Activated CD4-positive, alpha-beta T cell treated with anti-CD3 and anti-CD28 coated beads, Interleukin-2, amount 10 ng/mL, durations not matched to agents 24 days and 14 days (primary cell): ENCODE measurements at regions of chrX and their contacts with region 1.

Region 1: GRCh38 chrX:86047174-86047935 is at the start of gene CHM:
- DNase-seq: peak; percentile 89
- H3K4me3 Mint-ChIP-seq: no peak within 1 kb of the TSS
- H3K27ac Mint-ChIP-seq: peak within 1 kb of the TSS; percentile 37
- H3K4me1 Mint-ChIP-seq: no peaks in the 10 kb centered on the region
- H3K27me3 Mint-ChIP-seq: no peaks in the 10 kb centered on the region
- total RNA-seq, gene CHM: 13.6 and 16.7 TPM in 2 replicates

Region 2: GRCh38 chrX:85870585-85870984 is 176.8 kb before region 1 on chrX:
- intact Hi-C with region 1: loop called (anchors 10 kb)
- DNase-seq: no peak
- H3K4me3 Mint-ChIP-seq: no peak overlapping the region
- H3K27ac Mint-ChIP-seq: no peak overlapping the region
- H3K4me1 Mint-ChIP-seq: no peaks in the 10 kb centered on the region
- H3K27me3 Mint-ChIP-seq: no peaks in the 10 kb centered on the region